ENCODE measurements at regions of chr2 and their contacts with region 1.

Region 1: GRCh38 chr2:191501561-191502168 is 176.3 kb upstream of the NABP1 start:
- DNase-seq: no peak
- H3K4me3 ChIP-seq: no peak overlapping the region
- H3K27ac ChIP-seq: no peak overlapping the region
- H3K4me1 ChIP-seq: peaks cover 0 to 5% (median 1%) of the 10 kb centered on the region in 4 experiments; a peak in 4 of 7 replicates
- H3K27me3 ChIP-seq: no peaks in the 10 kb centered on the region
- CTCF ChIP-seq: no peak; a peak in 1 of 4 replicates
- EP300 ChIP-seq: no peak
- POLR2A ChIP-seq: no peak
- RAD21 ChIP-seq: peak in 1 of 2 experiments; percentile 26; a peak in 3 of 4 replicates

Region 2: DNA sequence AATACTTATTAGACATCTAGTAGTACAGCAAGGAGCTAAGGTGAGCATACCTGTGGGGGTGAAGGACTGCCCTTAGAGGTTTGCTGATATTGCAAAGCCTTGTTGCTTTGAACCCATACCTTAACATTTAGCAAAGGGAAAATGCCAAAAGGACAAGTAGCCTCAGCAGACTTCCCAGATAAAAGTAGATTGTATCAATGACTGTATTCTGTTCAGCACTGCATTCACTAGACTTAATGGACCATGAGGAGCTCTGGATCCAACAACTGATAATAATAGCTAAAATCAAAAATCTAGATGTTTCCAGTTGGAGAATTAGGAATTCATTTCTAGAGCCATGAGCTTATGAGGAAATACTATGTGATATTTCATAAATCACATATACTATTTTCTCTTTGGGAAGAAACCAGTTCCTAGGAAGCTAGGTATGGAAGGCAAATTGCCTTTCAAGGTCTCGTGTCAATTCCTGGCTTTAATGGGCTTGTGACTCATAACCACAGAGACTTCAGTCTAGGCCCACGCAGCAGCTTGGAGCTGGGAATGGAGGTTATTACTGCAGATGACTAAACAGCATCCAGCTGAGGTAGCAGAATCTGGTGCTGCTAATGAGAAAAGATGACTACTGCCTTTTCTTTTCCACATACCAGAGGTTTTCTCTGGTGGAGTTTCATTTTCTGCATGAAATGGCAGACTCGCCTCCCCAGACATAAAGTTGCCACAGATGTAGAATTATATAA is 14.9 kb before region 1 on chr2:
- CTCF ChIA-PET with region 1: interaction called, 20 read pairs
- POLR2A ChIA-PET with region 1: no interaction called
- DNase-seq: no peak
- H3K4me3 ChIP-seq: no peak overlapping the region
- H3K27ac ChIP-seq: no peak overlapping the region
- H3K4me1 ChIP-seq: no peaks in the 10 kb centered on the region
- H3K27me3 ChIP-seq: no peaks in the 10 kb centered on the region
- CTCF ChIP-seq: no peak
- EP300 ChIP-seq: no peak
- POLR2A ChIP-seq: no peak
- RAD21 ChIP-seq: no peak

Region 3: GRCh38 chr2:191515551-191515950 is 13.9 kb after region 1 on chr2:
- CTCF ChIA-PET with region 1: interaction called, 10 read pairs
- POLR2A ChIA-PET with region 1: no interaction called
- DNase-seq: no peak
- H3K4me3 ChIP-seq: no peak overlapping the region
- H3K27ac ChIP-seq: no peak overlapping the region
- H3K4me1 ChIP-seq: no peaks in the 10 kb centered on the region
- H3K27me3 ChIP-seq: no peaks in the 10 kb centered on the region
- CTCF ChIP-seq: no peak
- EP300 ChIP-seq: no peak
- POLR2A ChIP-seq: no peak
- RAD21 ChIP-seq: no peak

Measured in H1 (cell line).